Left ventricle myocardium inferior (tissue), 1 donor: ENCODE measurements at regions of chr10 and their contacts with region 1.

Region 1: GRCh38 chr10:123559066-123559822 is 106.9 kb upstream of the GPR26 start:
- DNase-seq: peak; percentile 45
- H3K4me3 ChIP-seq: no peak overlapping the region
- H3K27ac ChIP-seq: no peak overlapping the region
- H3K4me1 ChIP-seq: no peaks in the 10 kb centered on the region
- H3K27me3 ChIP-seq: peaks cover 82% of the 10 kb centered on the region
- CTCF ChIP-seq: peak; percentile 93

Region 2: DNA sequence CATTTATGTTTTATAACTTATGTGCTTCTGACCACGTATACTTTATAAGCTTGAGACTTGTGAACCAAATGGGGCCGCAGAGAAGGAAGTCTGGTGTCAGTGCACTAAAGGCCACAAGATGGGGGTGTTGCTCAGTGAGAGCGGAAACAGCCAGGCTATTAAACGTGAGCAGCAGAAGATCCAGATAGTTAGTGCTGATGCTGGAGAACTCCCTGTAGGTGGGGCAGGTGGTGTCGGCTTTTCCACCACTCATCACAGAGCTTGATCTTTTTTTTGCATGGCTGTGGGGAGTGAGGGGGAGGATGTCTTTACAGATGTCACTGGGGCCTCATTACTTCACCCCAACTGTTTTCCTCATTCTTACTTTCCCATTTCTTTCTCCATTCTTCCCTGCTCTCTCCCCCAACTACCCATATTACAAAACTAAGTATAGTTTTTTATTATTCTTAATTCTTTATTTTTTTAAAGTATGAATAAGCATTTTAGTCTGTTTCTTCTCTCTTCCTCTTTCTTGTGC is 515.8 kb before region 1 on chr10:
- intact Hi-C with region 1: loop called (anchors 10 kb)
- DNase-seq: no peak
- H3K4me3 ChIP-seq: no peak overlapping the region
- H3K27ac ChIP-seq: no peak overlapping the region
- H3K4me1 ChIP-seq: no peaks in the 10 kb centered on the region
- H3K27me3 ChIP-seq: no peaks in the 10 kb centered on the region
- CTCF ChIP-seq: peak; percentile 66

Region 3: DNA sequence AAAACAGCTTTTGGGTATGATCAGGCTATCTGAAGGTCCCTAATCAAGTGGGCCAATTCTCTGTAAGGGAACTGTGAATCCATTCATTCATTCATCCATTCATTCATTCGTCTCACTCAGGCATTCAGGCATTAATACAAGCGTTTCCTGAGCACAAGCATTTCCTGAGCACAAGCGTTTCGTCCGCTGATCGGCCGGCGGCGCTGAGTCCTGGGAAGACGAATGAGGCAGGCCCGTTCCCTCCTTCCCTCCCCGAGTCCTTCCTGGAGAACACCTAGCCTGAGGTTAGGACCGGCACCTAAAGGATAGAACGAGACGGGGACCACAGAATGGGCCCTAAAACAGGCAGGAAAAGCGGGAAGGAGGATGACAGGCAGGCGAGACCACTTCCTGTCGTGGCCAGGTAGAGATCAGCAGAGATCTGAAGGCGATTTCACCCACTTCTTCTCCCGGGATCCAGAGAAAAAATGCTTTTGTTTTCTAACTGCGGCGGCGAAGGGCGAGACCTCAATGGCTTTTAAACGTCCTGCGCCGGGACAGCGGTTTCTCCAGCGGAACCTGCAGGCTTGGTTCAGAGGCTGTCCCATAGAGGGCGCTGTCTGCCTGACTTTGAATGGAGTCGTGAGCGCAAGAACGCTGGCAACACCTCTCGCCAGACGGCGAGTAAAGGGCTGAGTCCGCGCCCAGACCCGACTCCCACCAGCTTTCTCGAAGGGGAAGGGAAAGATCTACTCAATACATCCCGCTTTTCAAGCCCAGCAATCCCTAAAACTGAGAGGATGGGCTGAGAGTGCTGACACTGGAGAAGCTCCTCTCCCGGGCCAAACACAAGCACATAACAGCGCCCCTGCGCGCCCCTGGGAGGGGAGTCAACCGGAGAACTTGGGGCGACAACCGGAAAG is 426.4 kb before region 1 on chr10:
- intact Hi-C with region 1: loop called (anchors 5 kb)
- DNase-seq: peak; percentile 77
- H3K4me3 ChIP-seq: peak overlapping the region; percentile 49
- H3K27ac ChIP-seq: no peak overlapping the region
- H3K4me1 ChIP-seq: peaks cover 55% of the 10 kb centered on the region
- H3K27me3 ChIP-seq: peaks cover 100% of the 10 kb centered on the region
- CTCF ChIP-seq: peak; percentile 94

Region 4: DNA sequence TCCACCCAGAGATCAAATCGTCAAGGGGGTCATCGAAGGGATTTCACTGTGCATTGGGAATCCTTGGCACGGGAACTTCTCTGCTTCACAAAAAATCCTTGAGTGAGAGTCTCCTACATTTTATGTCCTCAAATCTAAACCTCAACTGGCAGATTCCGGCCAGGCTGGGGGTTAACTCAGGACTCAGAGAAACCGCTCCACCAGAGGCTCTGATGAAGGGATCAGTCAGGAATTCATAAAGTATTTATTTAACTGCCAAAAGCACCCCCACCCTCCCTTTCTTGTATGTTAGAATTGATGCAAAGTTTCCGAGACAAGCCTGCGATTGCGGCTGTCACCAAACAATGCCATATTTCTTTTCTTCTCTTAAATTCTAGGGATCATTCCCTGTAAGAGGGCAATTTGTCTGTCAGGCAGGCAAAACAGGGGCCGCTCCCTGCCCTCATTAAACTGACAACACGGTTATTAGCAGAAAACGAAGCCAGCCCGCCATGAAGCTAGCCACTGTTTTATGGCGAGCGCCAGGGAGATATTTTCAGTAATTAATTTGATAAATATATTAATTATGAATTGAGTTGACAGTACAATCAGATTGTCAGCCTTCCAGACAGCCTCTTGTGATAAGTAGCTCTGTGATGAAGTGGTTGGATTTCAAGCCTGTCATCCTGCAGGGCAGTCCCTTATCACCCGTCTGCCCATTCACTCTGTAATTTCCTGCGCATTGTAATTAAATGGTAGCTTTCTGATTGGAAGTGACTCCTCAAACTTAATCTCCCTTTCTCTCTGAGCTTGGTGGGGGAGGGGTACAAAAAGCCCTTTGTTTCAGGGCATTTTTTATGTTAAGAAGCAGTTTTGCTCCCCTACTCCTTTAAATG is 46.1 kb before region 1 on chr10:
- intact Hi-C with region 1: no loop called
- DNase-seq: no peak
- H3K4me3 ChIP-seq: no peak overlapping the region
- H3K27ac ChIP-seq: no peak overlapping the region
- H3K4me1 ChIP-seq: no peaks in the 10 kb centered on the region
- H3K27me3 ChIP-seq: peaks cover 65% of the 10 kb centered on the region
- CTCF ChIP-seq: no peak

Region 5: DNA sequence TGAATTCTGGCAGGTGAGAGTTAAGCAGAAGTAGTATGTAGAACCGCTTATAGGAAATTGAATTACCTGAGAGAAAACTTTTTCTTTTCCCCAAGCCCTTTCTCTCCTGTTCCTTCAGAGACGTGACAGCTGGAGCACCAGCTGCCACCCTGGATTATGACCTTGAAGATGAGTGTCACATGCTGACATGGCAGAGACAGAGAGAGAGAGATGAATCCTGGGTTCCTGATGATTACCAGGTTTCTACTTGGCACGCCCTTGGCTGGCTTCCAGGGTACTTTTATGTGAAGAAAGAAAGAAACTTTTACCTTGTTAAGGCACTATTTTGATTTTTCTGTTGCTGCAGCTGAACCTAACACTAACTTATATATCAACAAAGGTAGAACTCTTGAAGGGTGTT is 206.8 kb after region 1 on chr10:
- intact Hi-C with region 1: no loop called
- DNase-seq: no peak
- H3K4me3 ChIP-seq: no peak overlapping the region
- H3K27ac ChIP-seq: no peak overlapping the region
- H3K4me1 ChIP-seq: no peaks in the 10 kb centered on the region
- H3K27me3 ChIP-seq: peaks cover 61% of the 10 kb centered on the region
- CTCF ChIP-seq: no peak